Activated T-helper 2 cell treated with anti-CD3 and anti-CD28 coated beads, Interferon-gamma antibody, Interleukin-2, Interleukin-4, amounts not matched to agents 10 μg/mL and 5 μg/mL and 100 μg/mL, durations not matched to agents 14 hours and 24 hours and 36 hours (primary cell): ENCODE measurements at regions of chr1 and their contacts with region 1.

Region 1: GRCh38 chr1:16366722-16367257 is at the start of gene SZRD1:
- DNase-seq: peak; percentile 95
- H3K4me3 Mint-ChIP-seq: peak within 1 kb of the TSS; percentile 96
- H3K27ac Mint-ChIP-seq: peak within 1 kb of the TSS; percentile 99
- H3K4me1 Mint-ChIP-seq: peaks cover 30% of the 10 kb centered on the region
- H3K27me3 Mint-ChIP-seq: no peaks in the 10 kb centered on the region
- total RNA-seq, gene SZRD1: 198 TPM in 2 replicates

Region 2: DNA sequence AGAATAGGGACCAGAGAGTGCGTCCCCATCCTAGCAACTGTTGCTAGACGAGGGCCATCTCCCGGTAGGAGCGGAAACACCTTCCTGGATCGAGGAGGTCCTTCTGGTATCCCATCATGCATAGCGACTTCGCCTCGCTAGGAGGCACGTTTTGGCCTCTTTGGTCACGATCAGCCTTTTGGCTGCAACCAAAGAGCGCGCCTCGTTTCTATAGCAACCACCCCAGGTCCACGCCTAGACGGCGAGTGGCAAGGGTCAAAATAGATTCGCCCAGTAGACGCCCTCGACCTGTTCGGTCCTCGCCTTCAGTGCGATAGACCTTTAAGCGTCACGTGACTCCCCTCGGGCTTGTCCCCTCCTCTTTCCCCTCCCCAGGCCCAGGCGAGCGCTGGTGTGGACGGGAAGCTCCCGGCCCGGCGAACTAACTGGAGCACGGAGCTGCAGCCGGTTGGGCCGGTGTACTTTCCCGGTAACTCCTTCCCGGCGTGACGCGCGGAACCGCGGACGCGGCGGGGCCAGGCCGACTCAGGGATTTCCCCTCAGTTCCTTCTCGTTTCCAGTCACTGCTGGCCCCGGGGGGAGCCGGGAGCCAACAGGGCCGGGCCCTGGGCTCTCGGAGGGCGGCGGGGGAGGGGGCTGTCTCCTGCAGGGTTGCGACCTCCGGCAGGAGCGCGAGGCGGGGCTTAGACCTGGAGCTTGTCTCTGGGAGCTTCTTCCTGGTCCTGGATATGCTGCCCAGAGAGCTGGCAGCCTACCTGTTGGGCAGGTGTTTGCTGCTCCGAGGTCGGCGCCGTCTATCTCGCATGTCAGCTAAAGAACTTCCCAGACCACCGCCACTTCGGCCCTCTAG is 840.1 kb before region 1 on chr1 and contains the start of gene DNAJC16:
- intact Hi-C with region 1: loop called (anchors 1 kb)
- DNase-seq: peak; percentile 99
- H3K4me3 Mint-ChIP-seq: peak within 1 kb of the TSS; percentile 87
- H3K27ac Mint-ChIP-seq: peak within 1 kb of the TSS; percentile 98
- H3K4me1 Mint-ChIP-seq: peaks cover 44% of the 10 kb centered on the region
- H3K27me3 Mint-ChIP-seq: no peaks in the 10 kb centered on the region
- total RNA-seq, gene DNAJC16: 10.9 and 18.7 TPM in 2 replicates

Region 3: DNA sequence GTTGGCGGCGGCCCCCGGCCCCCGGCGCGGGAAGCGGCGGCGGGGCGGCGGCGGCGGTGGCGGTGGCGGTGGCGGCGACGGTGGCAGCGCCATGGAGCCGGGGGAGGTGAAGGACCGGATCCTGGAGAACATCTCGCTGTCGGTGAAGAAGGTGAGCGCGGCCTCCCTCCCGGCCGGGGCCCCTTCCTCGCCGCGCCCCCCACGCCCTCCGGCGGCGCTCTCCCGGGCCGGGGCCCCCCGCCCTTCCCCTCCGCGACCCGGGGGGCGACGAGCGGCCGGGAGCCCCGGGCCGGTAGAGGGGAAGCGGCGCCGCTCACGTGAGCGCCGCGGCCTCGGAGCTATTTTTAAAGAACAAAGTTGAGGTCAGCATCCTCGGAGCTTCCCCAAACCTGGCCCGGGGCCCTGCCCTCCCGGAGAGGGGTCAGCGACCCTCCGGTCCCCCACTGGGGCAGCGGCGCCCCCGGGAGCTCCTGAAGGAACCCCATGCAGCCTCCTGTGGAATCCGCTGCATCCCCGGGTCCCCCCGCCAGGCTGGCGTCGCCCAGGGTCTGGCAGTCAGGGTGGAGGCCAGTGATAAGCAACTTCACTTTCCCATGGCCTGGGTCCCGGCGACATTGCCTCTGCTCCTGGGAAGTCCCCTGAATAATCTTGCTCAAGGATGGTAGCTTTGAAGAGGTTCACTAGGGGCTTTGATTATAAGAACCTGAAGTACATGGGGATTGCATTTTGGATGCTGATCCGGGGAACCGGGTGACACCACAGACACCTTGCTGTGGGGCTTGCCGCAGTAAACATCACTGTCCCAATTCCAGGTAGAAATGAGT is 682.1 kb before region 1 on chr1:
- intact Hi-C with region 1: loop called (anchors 10 kb)
- DNase-seq: peak; percentile 26
- H3K4me3 Mint-ChIP-seq: peak overlapping the region; percentile 83
- H3K27ac Mint-ChIP-seq: peak overlapping the region; percentile 73
- H3K4me1 Mint-ChIP-seq: peaks cover 22% of the 10 kb centered on the region
- H3K27me3 Mint-ChIP-seq: no peaks in the 10 kb centered on the region

Region 4: GRCh38 chr1:15966081-15966955 is 400.5 kb before region 1 on chr1:
- intact Hi-C with region 1: loop called (anchors 5 kb)
- DNase-seq: peak; percentile 59
- H3K4me3 Mint-ChIP-seq: peak overlapping the region; percentile 77
- H3K27ac Mint-ChIP-seq: peak overlapping the region; percentile 99
- H3K4me1 Mint-ChIP-seq: peaks cover 63% of the 10 kb centered on the region
- H3K27me3 Mint-ChIP-seq: no peaks in the 10 kb centered on the region

Region 5: GRCh38 chr1:16236511-16237342 is 130.1 kb before region 1 on chr1 and contains the start of gene CPLANE2:
- intact Hi-C with region 1: loop called (anchors 1 kb)
- DNase-seq: peak; percentile 95
- H3K4me3 Mint-ChIP-seq: peak within 1 kb of the TSS; percentile 86
- H3K27ac Mint-ChIP-seq: peak within 1 kb of the TSS; percentile 80
- H3K4me1 Mint-ChIP-seq: peaks cover 18% of the 10 kb centered on the region
- H3K27me3 Mint-ChIP-seq: no peaks in the 10 kb centered on the region
- total RNA-seq, gene CPLANE2: 3.2 and 3.9 TPM in 2 replicates

Region 6: GRCh38 chr1:16386454-16387113 is 19.8 kb after region 1 on chr1:
- intact Hi-C with region 1: loop called (anchors 2 kb)
- DNase-seq: no peak
- H3K4me3 Mint-ChIP-seq: peak overlapping the region; percentile 51
- H3K27ac Mint-ChIP-seq: peak overlapping the region; percentile 35
- H3K4me1 Mint-ChIP-seq: peaks cover 55% of the 10 kb centered on the region
- H3K27me3 Mint-ChIP-seq: no peaks in the 10 kb centered on the region

Region 7: GRCh38 chr1:16498573-16499413 is 132.0 kb after region 1 on chr1:
- intact Hi-C with region 1: loop called (anchors 5 kb)
- DNase-seq: peak; percentile 83
- H3K4me3 Mint-ChIP-seq: peak overlapping the region; percentile 84
- H3K27ac Mint-ChIP-seq: no peak overlapping the region
- H3K4me1 Mint-ChIP-seq: peaks cover 10% of the 10 kb centered on the region
- H3K27me3 Mint-ChIP-seq: peaks cover 11% of the 10 kb centered on the region